Activated CD4-positive, alpha-beta memory T cell treated with anti-CD3 and anti-CD28 coated beads for 36 hours (primary cell): ENCODE measurements at regions of chr13 and their contacts with region 1.

Region 1: DNA sequence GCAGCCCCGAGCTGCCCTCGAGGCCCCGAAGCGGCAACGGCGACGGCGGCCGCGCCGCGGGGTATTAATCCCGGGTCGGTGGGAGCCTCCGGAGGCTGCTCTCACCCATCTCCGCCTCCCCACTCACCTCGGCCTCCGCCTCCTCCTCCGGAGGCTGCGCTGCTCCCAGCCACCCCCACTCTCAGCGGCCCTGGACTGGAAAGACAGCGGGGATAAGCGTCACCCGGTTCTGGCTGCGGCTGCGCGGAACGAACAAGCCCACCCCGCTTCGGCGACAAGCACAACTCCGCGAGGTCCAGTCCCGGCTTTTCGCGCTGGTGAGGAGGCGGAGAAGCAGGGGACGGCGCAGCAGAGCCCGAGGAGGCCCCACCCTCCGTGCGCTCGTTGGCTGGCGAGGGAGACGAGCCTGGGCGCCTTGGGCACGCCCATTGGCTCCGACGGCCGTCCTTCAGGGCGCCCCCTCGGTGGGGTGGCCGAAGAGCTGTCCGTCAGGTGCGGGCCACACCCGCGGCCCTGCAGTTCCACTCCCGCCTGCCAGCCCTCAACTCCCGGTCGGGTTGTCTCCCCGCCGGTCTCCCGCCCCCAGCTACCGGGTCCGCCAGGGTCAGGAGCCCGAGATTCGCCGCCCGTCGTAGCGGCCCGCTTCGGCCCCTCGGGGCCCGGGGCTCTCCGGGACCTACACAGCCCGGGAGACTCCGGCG is at the start of gene ZMYM5:
- DNase-seq: peak; percentile 98
- H3K4me3 Mint-ChIP-seq: peak within 1 kb of the TSS; percentile 95
- H3K27ac Mint-ChIP-seq: peak within 1 kb of the TSS; percentile 97
- H3K4me1 Mint-ChIP-seq: peaks cover 43% of the 10 kb centered on the region
- H3K27me3 Mint-ChIP-seq: no peaks in the 10 kb centered on the region
- total RNA-seq, gene ZMYM5: 10.0 to 11.1 TPM

Region 2: DNA sequence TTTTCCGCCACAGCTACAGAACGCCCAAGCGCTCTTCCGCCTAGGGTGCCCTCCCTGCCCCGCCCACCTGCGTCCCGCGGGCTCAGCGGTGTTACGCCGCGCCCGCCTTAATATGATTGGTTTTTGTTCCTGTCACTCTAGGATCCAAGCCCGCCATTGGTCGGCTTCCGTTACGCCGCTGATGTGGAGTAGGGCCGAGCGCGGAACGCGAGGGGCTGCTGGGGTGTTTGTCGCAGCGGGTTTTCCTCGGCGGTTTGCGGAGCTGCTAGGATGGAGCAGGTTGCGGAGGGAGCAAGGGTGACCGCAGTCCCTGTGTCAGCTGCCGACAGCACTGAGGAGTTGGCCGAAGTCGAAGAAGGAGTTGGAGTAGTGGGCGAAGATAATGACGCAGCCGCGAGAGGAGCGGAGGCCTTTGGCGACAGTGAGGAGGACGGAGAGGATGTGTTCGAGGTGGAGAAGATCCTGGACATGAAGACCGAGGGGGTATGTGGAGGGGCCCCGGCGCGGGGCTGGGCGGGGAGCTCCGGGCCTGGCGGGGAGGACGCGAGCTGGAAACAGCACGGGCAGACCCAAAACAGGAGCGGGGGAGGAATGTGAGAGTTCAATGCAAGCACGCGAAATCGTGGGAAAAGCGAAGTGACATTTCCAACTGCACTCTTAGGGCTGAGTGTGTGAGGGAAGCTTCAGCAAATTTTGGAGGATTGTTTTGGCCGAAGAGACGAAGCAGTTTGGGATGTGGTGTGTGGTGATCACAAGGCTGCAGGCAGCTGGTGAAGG is 229.8 kb before region 1 on chr13 and contains the start of gene MPHOSPH8:
- CTCF ChIA-PET with region 1: interaction called, 3 read pairs
- POLR2A ChIA-PET with region 1: interaction called, 3 read pairs
- intact Hi-C with region 1: loop called (anchors 1 kb)
- DNase-seq: peak; percentile 96
- H3K4me3 Mint-ChIP-seq: peak within 1 kb of the TSS; percentile 100
- H3K27ac Mint-ChIP-seq: peak within 1 kb of the TSS; percentile 98
- H3K4me1 Mint-ChIP-seq: peaks cover 25% of the 10 kb centered on the region
- H3K27me3 Mint-ChIP-seq: peaks cover 2% of the 10 kb centered on the region
- total RNA-seq, gene MPHOSPH8: 32.6 to 37.6 TPM

Region 3: DNA sequence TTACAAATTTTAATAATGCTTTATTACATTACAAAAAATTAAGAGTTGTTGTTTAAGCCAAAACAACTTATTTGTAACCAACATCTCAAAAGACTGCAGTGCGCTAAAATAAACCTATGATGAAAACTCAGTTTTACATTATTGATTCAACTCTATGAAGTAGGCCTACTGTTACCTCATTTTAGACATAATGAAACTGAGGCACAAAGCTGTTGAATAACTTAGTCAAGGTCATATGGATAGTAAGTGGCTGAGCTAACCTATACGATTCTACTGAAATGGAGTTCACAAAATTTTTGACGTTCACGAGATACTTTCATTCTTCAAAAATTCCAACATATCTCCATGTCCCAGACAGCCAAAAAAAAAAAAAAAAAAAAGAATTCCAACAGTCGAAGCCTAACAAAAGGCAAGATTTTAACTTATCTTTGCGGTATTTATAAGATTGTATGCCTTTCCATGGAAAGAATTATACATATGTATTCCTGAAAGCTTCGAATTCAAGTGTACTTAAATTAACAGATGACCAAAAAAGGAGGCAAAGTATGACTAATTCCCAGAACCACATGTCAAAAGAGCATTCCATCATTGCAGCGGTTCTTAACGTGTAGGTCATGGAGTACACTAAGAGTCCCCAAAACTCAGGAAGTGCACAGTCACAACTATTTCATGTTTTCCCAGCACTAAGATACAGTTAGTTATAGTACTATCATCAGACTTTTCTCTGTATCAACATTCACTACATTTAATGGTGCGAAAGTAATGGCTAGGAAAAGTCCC is 150.1 kb before region 1 on chr13:
- CTCF ChIA-PET with region 1: no interaction called
- POLR2A ChIA-PET with region 1: no interaction called
- intact Hi-C with region 1: loop called (anchors 1 kb)
- DNase-seq: no peak
- H3K4me3 Mint-ChIP-seq: no peak overlapping the region
- H3K27ac Mint-ChIP-seq: peak overlapping the region; percentile 78
- H3K4me1 Mint-ChIP-seq: peaks cover 19% of the 10 kb centered on the region
- H3K27me3 Mint-ChIP-seq: no peaks in the 10 kb centered on the region

Region 4: GRCh38 chr13:19782049-19782726 is 81.3 kb before region 1 on chr13:
- CTCF ChIA-PET with region 1: interaction called, 5 read pairs
- POLR2A ChIA-PET with region 1: interaction called, 21 read pairs
- intact Hi-C with region 1: loop called (anchors 1 kb)
- DNase-seq: peak; percentile 72
- H3K4me3 Mint-ChIP-seq: peak overlapping the region; percentile 98
- H3K27ac Mint-ChIP-seq: peak overlapping the region; percentile 99
- H3K4me1 Mint-ChIP-seq: peaks cover 6% of the 10 kb centered on the region
- H3K27me3 Mint-ChIP-seq: peaks cover 1% of the 10 kb centered on the region

Region 5: GRCh38 chr13:20006206-20006605 is 142.7 kb after region 1 on chr13:
- CTCF ChIA-PET with region 1: no interaction called
- POLR2A ChIA-PET with region 1: no interaction called
- intact Hi-C with region 1: no loop called
- DNase-seq: no peak
- H3K4me3 Mint-ChIP-seq: no peak overlapping the region
- H3K27ac Mint-ChIP-seq: no peak overlapping the region
- H3K4me1 Mint-ChIP-seq: peaks cover 4% of the 10 kb centered on the region
- H3K27me3 Mint-ChIP-seq: no peaks in the 10 kb centered on the region

Region 6: GRCh38 chr13:20425819-20426219 is 562.3 kb after region 1 on chr13:
- CTCF ChIA-PET with region 1: no interaction called
- POLR2A ChIA-PET with region 1: no interaction called
- intact Hi-C with region 1: loop called (anchors 5 kb)
- DNase-seq: peak; percentile 47
- H3K4me3 Mint-ChIP-seq: no peak overlapping the region
- H3K27ac Mint-ChIP-seq: no peak overlapping the region
- H3K4me1 Mint-ChIP-seq: peaks cover 58% of the 10 kb centered on the region
- H3K27me3 Mint-ChIP-seq: no peaks in the 10 kb centered on the region